ENCODE measurements at regions of chr4 and their contacts with region 1.

Region 1: DNA sequence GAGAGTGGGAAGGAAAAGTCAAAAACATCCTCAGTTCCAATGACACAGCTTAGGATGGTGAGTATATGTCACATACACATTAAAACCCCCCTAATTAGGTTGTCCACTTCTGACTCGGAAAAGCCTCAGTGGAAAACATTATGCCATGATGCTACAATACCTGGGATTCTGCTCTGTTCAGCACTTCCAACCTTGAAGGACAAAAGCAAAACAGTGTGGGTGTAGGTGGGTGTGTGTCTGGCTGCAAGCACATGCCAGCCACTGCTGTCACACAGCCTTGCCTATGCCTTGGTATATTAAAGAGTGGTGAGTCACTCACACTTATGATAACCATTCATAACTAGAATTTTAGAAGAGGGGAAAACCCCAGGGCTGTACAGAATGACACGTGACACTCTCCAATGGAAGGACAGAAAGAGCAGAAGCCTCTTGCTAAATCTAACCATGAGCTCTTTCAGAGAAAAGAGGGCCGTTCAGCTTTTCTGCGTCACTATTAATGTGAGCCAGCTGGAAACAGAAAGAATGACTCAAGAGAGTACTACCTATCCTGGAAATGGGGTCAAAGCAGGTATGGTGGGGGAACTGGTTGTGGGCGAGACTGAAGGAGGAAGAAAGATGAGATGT is 159.6 kb downstream of the TET2 start:
- DNase-seq: peak; percentile 79
- ATAC-seq: peak; percentile 92
- H3K4me3 Mint-ChIP-seq: peak overlapping the region; percentile 46
- H3K27ac Mint-ChIP-seq: peak overlapping the region; percentile 91
- H3K4me1 Mint-ChIP-seq: peaks cover 28% of the 10 kb centered on the region
- H3K27me3 Mint-ChIP-seq: peaks cover 6% of the 10 kb centered on the region

Region 2: DNA sequence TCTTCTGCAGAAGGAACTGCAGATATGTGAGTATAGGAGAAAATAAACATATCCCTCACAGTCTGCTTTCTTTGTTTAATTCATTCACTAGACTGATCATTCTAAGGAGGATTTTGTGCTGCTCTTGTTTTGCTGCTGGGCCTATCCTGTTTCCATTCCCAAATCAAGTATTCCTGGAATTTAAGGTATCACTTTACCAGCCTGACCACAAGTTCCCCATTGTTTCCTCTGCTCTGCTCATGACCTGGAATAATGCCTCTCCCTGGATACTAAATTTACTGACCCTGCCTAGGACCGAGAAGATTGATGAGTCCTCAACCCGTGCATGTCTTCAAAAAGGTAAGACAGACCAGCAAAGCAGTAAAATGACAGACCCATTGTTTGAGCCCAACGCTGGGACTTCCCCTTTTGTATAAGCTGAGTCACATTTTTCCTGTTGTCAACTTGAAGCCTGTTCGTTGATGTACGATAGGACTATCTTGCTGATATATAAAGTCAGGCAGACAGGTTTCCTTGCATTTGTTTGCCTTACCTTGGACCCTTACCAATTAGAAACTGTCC is 245.1 kb before region 1 on chr4:
- CTCF ChIA-PET with region 1: no interaction called
- POLR2A ChIA-PET with region 1: interaction called, 4 read pairs
- intact Hi-C with region 1: loop called (anchors 1 kb)
- DNase-seq: peak; percentile 64
- ATAC-seq: peak; percentile 62
- H3K4me3 Mint-ChIP-seq: peak overlapping the region; percentile 48
- H3K27ac Mint-ChIP-seq: peak overlapping the region; percentile 89
- H3K4me1 Mint-ChIP-seq: peaks cover 53% of the 10 kb centered on the region
- H3K27me3 Mint-ChIP-seq: peaks cover 2% of the 10 kb centered on the region

Region 3: GRCh38 chr4:105146276-105147015 is 159.8 kb before region 1 on chr4 and contains the start of gene TET2:
- CTCF ChIA-PET with region 1: interaction called, 3 read pairs
- POLR2A ChIA-PET with region 1: interaction called, 3 read pairs
- intact Hi-C with region 1: loop called (anchors 1 kb)
- DNase-seq: peak; percentile 91
- ATAC-seq: peak; percentile 87
- H3K4me3 Mint-ChIP-seq: peak within 1 kb of the TSS; percentile 97
- H3K27ac Mint-ChIP-seq: peak within 1 kb of the TSS; percentile 98
- H3K4me1 Mint-ChIP-seq: peaks cover 40% of the 10 kb centered on the region
- H3K27me3 Mint-ChIP-seq: no peaks in the 10 kb centered on the region
- total RNA-seq, gene TET2: 35.0 to 40.6 TPM

Region 4: DNA sequence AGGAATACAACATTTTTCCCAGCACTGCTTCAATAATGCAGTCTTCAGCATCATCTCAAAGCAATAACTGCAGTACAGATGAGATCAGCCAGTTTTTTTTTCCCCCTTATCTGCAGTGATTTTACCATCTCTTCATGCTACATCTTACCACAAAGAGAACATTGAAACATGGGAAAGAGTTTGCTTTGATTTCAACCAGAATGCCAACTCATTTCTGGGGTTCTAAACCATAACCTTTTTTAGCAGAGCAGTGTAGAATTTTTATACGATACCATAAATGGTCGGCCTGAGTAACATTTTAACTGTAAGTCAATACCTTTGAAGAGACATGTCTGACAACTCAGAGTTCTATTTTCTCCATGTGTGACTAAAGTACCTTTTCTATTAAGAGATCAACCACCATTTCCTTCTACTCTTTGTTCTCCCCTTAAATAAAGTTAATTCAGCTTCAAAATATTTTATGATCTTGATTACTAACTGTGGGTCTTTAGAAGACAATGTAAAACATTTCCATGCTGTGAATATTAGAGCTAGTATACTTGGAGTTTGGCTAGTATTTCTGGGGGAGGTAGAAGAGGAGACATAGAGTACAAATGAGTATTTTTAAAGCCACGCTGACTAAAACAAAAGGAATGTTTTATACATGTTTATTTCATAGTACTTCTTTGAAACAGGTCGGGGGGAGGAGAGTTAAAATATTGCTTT is 90.5 kb before region 1 on chr4:
- CTCF ChIA-PET with region 1: no interaction called
- POLR2A ChIA-PET with region 1: no interaction called
- intact Hi-C with region 1: loop called (anchors 1 kb)
- DNase-seq: no peak
- ATAC-seq: peak; percentile 95
- H3K4me3 Mint-ChIP-seq: peak overlapping the region; percentile 20
- H3K27ac Mint-ChIP-seq: peak overlapping the region; percentile 78
- H3K4me1 Mint-ChIP-seq: peaks cover 49% of the 10 kb centered on the region
- H3K27me3 Mint-ChIP-seq: no peaks in the 10 kb centered on the region

Region 5: GRCh38 chr4:105327222-105327621 is 21.0 kb after region 1 on chr4:
- CTCF ChIA-PET with region 1: no interaction called
- POLR2A ChIA-PET with region 1: no interaction called
- intact Hi-C with region 1: loop called (anchors 1 kb)
- DNase-seq: peak; percentile 35
- ATAC-seq: peak; percentile 96
- H3K4me3 Mint-ChIP-seq: no peak overlapping the region
- H3K27ac Mint-ChIP-seq: no peak overlapping the region
- H3K4me1 Mint-ChIP-seq: peaks cover 17% of the 10 kb centered on the region
- H3K27me3 Mint-ChIP-seq: no peaks in the 10 kb centered on the region

Region 6: DNA sequence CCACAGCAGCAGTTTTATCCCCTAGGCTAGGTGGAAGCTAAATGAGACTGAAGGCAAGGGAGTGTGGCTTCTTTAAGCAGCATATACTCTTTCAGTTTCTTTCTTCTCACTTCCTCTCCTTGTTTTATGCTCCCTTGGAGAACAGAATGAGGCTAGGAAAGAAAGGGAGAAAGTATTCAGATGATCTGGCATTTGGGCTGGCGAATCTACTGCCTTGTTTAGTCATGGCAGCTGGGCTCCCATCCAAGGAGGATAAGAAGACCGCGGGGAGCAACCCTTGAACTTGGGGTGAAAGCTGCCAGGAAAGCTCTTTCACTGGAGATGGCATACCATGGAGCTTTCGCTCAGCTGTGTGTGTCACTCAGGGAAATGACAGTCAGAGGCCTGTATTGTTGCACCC is 318.3 kb after region 1 on chr4:
- CTCF ChIA-PET with region 1: no interaction called
- POLR2A ChIA-PET with region 1: no interaction called
- intact Hi-C with region 1: no loop called
- DNase-seq: no peak
- ATAC-seq: no peak
- H3K4me3 Mint-ChIP-seq: no peak overlapping the region
- H3K27ac Mint-ChIP-seq: no peak overlapping the region
- H3K4me1 Mint-ChIP-seq: no peaks in the 10 kb centered on the region
- H3K27me3 Mint-ChIP-seq: peaks cover 9% of the 10 kb centered on the region

Measured in activated CD4-positive, alpha-beta T cell treated with anti-CD3 and anti-CD28 coated beads for 36 hours (primary cell).